T-cell (primary cell): ENCODE measurements at regions of chr12 and their contacts with region 1.

Region 1: GRCh38 chr12:122244565-122245371 is 18.9 kb upstream of the DIABLO start:
- DNase-seq: peak in 16 of 35 experiments; percentile 1 to 60 (median 14)
- ATAC-seq: peak; percentile 79 to 84 (median 83)
- H3K4me3 ChIP-seq: peak overlapping the region in 1 of 2 donors; percentile 49
- H3K4me3 Mint-ChIP-seq: peak overlapping the region; percentile 76 to 85 (median 82)
- H3K27ac ChIP-seq: peak overlapping the region; percentile 72
- H3K27ac Mint-ChIP-seq: peak overlapping the region; percentile 91 to 93
- H3K4me1 ChIP-seq: peaks cover 5 to 26% of the 10 kb centered on the region in 2 experiments
- H3K4me1 Mint-ChIP-seq: peaks cover 17 to 41% (median 34%) of the 10 kb centered on the region in 3 donors
- H3K27me3 ChIP-seq: no peaks in the 10 kb centered on the region
- H3K27me3 Mint-ChIP-seq: no peaks in the 10 kb centered on the region

Region 2: GRCh38 chr12:122159882-122160281 is 84.9 kb before region 1 on chr12:
- CTCF ChIA-PET with region 1: no interaction called
- POLR2A ChIA-PET with region 1: no interaction called
- DNase-seq: no peak
- ATAC-seq: no peak
- H3K4me3 ChIP-seq: no peak overlapping the region
- H3K4me3 Mint-ChIP-seq: no peak overlapping the region
- H3K27ac ChIP-seq: no peak overlapping the region
- H3K27ac Mint-ChIP-seq: no peak overlapping the region
- H3K4me1 ChIP-seq: peaks cover 0 to 20% of the 10 kb centered on the region in 2 experiments
- H3K4me1 Mint-ChIP-seq: peaks cover 0 to 10% (median 4%) of the 10 kb centered on the region in 3 donors
- H3K27me3 ChIP-seq: peaks cover 0 to 2% of the 10 kb centered on the region in 2 experiments
- H3K27me3 Mint-ChIP-seq: peaks cover 0 to under 1% of the 10 kb centered on the region in 2 donors

Region 3: DNA sequence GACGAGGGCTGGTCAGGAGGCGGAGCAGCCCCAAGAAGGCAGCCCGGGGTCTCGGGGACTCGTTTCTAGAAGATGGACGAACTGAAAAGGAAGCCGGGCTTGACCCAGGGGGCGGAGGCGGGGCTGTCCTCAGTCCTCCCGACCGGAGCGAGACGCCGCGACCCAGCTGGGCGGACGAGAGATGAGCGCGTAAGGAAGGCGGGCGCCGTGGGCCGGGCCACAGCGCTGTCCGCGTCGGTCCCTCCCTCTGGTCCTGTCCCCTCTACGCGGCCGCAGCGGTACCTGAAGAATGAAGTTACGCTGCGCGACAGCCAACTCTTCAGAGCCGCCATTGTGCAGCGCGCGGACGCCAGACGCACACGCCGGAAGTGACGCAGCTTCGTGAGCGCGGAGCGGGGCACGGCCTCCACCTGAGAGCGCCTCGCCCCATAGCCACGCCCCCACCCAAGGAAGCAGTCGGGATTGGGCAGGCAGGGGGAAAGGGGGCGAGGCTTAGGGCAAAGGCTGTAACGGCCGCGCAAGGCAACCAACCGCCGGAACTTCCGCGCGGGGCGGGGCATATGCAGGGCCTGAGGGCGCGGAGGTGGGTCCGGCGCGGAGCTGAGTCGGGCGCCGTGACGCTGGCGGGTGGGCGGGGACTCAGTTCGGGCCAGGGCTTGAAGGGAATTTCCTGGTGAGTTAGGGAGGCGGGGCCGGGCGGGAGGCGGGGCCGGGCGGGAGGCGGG is 18.9 kb before region 1 on chr12 and contains the start of gene DIABLO:
- CTCF ChIA-PET with region 1: interaction called, 3 to 19 read pairs
- POLR2A ChIA-PET with region 1: interaction called in 1 of 2 experiments, 13 read pairs
- DNase-seq: peak; percentile 97 to 100 (median 100)
- ATAC-seq: peak; percentile 89 to 95 (median 94)
- H3K4me3 ChIP-seq: peak within 1 kb of the TSS; percentile 90 to 96
- H3K4me3 Mint-ChIP-seq: peak within 1 kb of the TSS; percentile 82 to 90 (median 87)
- H3K27ac ChIP-seq: peak within 1 kb of the TSS; percentile 91
- H3K27ac Mint-ChIP-seq: peak within 1 kb of the TSS; percentile 85 to 89
- H3K4me1 ChIP-seq: peaks cover 10 to 48% of the 10 kb centered on the region in 2 experiments
- H3K4me1 Mint-ChIP-seq: peaks cover 40 to 56% (median 51%) of the 10 kb centered on the region in 3 donors
- H3K27me3 ChIP-seq: no peaks in the 10 kb centered on the region
- H3K27me3 Mint-ChIP-seq: no peaks in the 10 kb centered on the region
- total RNA-seq, gene DIABLO: 39.8 to 85.1 (median 41.3) TPM

Region 4: DNA sequence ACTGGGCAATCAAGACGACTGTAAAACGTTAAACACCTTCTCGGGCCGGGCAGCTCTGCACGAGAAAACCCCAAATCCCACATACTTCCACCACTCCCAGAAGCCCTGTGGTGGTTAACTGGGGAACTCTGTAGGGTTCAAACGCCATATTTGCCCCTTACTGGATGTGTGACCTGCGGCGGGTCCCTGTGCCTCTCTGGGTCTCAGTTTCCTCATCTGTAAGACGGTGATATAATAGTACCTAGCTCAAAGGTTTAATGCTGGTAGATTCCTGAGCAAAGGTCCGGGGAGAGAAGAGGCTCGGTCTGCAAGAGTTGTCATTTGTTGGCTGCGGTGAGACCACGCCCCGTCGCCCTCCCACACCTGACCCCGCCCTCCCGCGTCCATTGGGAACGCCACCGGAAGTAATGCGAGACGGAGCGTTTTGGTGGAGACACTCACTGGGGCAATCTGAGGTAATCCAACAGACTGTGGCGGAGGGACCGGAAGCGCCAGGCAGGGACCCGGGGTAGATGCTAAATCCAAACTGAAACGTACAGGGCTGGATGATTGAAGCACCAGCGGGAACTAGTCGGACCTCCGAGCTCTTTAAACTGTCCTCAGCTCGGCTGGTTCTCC is 729.6 kb after region 1 on chr12:
- CTCF ChIA-PET with region 1: no interaction called
- POLR2A ChIA-PET with region 1: no interaction called
- DNase-seq: peak; percentile 96 to 100 (median 98)
- ATAC-seq: peak; percentile 85 to 87 (median 86)
- H3K4me3 ChIP-seq: peak overlapping the region; percentile 92 to 94
- H3K4me3 Mint-ChIP-seq: peak overlapping the region; percentile 97
- H3K27ac ChIP-seq: peak overlapping the region; percentile 99
- H3K27ac Mint-ChIP-seq: peak overlapping the region; percentile 99 to 100
- H3K4me1 ChIP-seq: peaks cover 10 to 48% of the 10 kb centered on the region in 2 experiments
- H3K4me1 Mint-ChIP-seq: peaks cover 20 to 40% (median 31%) of the 10 kb centered on the region in 3 donors
- H3K27me3 ChIP-seq: no peaks in the 10 kb centered on the region
- H3K27me3 Mint-ChIP-seq: no peaks in the 10 kb centered on the region